ENCODE measurements at regions of chr22 and their contacts with region 1.

Region 1: GRCh38 chr22:31630331-31631329 is 31.4 kb downstream of the PISD start:
- DNase-seq: peak; percentile 71 to 90 (median 89)
- ATAC-seq: peak; percentile 92
- H3K4me3 ChIP-seq: peak overlapping the region; percentile 74
- H3K4me3 Mint-ChIP-seq: peak overlapping the region; percentile 80 to 92 (median 88)
- H3K27ac ChIP-seq: peak overlapping the region; percentile 95
- H3K27ac Mint-ChIP-seq: peak overlapping the region; percentile 89 to 96 (median 93)
- H3K4me1 ChIP-seq: peaks cover 16 to 19% of the 10 kb centered on the region in 2 donors
- H3K4me1 Mint-ChIP-seq: peaks cover 18 to 58% (median 38%) of the 10 kb centered on the region in 7 donors
- H3K27me3 ChIP-seq: no peaks in the 10 kb centered on the region
- H3K27me3 Mint-ChIP-seq: no peaks in the 10 kb centered on the region

Region 2: GRCh38 chr22:31107178-31107893 is 523.3 kb before region 1 on chr22 and contains the start of gene SELENOM:
- CTCF ChIA-PET with region 1: no interaction called
- POLR2A ChIA-PET with region 1: no interaction called
- intact Hi-C with region 1: loop called in 1 of 2 experiments (anchors 10 kb)
- DNase-seq: peak; percentile 73 to 89 (median 84)
- ATAC-seq: peak; percentile 98
- H3K4me3 ChIP-seq: peak within 1 kb of the TSS; percentile 94
- H3K4me3 Mint-ChIP-seq: peak within 1 kb of the TSS; percentile 88 to 98 (median 93)
- H3K27ac ChIP-seq: peak within 1 kb of the TSS; percentile 86
- H3K27ac Mint-ChIP-seq: peak within 1 kb of the TSS; percentile 81 to 96 (median 90)
- H3K4me1 ChIP-seq: peaks cover 8 to 16% of the 10 kb centered on the region in 2 donors
- H3K4me1 Mint-ChIP-seq: peaks cover 12 to 26% (median 20%) of the 10 kb centered on the region in 7 donors
- H3K27me3 ChIP-seq: no peaks in the 10 kb centered on the region
- H3K27me3 Mint-ChIP-seq: peaks cover 0 to 3% (median 0%) of the 10 kb centered on the region in 5 donors
- total RNA-seq, gene SELENOM: 9.1 to 71.5 (median 68.6) TPM

Region 3: GRCh38 chr22:31399211-31400028 is 231.2 kb before region 1 on chr22 and contains the start of gene DRG1:
- CTCF ChIA-PET with region 1: no interaction called
- POLR2A ChIA-PET with region 1: interaction called, 5 read pairs
- intact Hi-C with region 1: loop called (anchors 1 to 5 kb)
- DNase-seq: peak; percentile 90 to 98 (median 93)
- ATAC-seq: peak; percentile 99
- H3K4me3 ChIP-seq: peak within 1 kb of the TSS; percentile 88
- H3K4me3 Mint-ChIP-seq: peak within 1 kb of the TSS; percentile 92 to 99 (median 96)
- H3K27ac ChIP-seq: peak within 1 kb of the TSS; percentile 91
- H3K27ac Mint-ChIP-seq: peak within 1 kb of the TSS; percentile 85 to 97 (median 94)
- H3K4me1 ChIP-seq: peaks cover 10 to 15% of the 10 kb centered on the region in 2 donors
- H3K4me1 Mint-ChIP-seq: peaks cover 5 to 35% (median 22%) of the 10 kb centered on the region in 7 donors
- H3K27me3 ChIP-seq: no peaks in the 10 kb centered on the region
- H3K27me3 Mint-ChIP-seq: no peaks in the 10 kb centered on the region
- total RNA-seq, gene DRG1: 53.3 to 109 (median 84.4) TPM

Region 4: DNA sequence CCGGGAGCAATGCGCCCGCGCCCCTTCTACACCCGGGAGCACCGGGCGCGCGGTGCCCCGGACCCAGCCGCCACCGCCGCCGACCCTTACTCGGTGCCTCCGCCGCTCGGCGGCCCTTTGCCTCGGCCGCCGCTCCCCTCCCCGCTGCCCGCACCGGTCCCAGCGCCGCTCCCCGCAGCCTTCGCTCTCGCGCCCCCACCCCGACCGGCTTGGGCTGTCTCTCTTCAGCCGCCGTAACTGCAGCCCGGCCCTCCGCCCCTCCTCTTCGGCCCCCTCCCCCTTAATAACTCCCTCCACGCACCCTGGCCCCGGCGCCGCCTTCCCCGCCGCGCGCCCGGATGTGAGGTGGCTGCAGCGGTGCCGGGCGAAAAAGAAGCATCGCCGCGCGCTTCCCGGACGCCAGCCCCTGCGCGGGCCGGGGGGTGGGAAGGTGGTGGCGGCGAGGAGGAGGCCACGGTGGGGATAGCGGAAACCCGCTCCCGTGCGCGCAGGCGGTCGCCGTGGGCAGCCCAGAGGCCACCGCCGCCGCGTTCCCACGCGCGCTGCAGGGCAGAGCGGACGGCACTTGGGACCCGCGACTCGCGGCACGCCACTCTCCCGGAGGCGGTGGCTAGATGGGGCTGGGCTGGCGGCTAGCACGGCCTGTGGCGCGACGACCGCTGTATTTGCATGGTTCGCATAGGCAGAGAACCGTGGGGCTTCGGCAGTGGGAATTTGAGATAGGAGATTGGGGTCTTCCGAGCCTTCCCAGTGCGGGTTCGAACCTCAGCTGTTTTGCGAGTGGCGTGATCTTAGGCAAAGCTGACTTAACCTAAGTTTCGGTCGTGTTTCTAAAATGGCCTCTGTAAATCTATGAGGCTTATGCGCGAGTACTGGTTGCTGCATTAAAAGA is 140.8 kb before region 1 on chr22 and contains the start of gene EIF4ENIF1:
- CTCF ChIA-PET with region 1: no interaction called
- POLR2A ChIA-PET with region 1: interaction called, 6 read pairs
- intact Hi-C with region 1: loop called (anchors 1 kb)
- DNase-seq: peak; percentile 81 to 91 (median 87)
- ATAC-seq: peak; percentile 89
- H3K4me3 ChIP-seq: peak within 1 kb of the TSS; percentile 66
- H3K4me3 Mint-ChIP-seq: peak within 1 kb of the TSS; percentile 87 to 98 (median 94)
- H3K27ac ChIP-seq: peak within 1 kb of the TSS; percentile 92
- H3K27ac Mint-ChIP-seq: peak within 1 kb of the TSS; percentile 93 to 99 (median 96)
- H3K4me1 ChIP-seq: peaks cover 19 to 25% of the 10 kb centered on the region in 2 donors
- H3K4me1 Mint-ChIP-seq: peaks cover 7 to 54% (median 47%) of the 10 kb centered on the region in 7 donors
- H3K27me3 ChIP-seq: no peaks in the 10 kb centered on the region
- H3K27me3 Mint-ChIP-seq: no peaks in the 10 kb centered on the region
- total RNA-seq, gene EIF4ENIF1: 26.3 to 46.5 (median 36.8) TPM

Region 5: DNA sequence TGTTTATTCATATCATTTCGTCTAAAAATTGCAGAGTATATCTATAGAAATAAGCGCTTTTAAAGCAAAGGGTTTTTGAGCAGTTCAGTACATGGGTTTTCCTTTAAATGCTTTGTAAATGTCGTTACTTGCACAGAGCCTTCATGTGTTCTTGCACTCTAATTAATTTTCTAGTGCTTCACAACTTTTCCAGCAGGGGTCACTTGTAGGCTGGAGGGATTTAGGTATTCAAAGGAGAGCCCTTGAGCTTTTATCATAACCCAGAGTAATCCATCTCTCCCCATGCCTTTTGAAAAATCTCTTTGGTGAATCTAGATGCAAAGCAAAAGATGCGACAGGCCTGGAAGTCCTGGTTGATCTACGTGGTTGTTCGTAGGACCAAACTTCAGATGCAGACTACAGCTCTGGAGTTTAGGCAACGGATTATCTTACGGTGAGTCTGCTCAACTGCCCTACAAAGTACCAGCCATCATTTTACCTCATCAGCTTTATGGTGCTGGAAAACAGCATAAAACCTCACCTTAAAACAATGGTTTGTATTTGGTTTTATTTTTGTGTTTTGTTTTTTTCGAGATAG is 73.9 kb before region 1 on chr22:
- CTCF ChIA-PET with region 1: interaction called, 16 read pairs
- POLR2A ChIA-PET with region 1: no interaction called
- intact Hi-C with region 1: loop called (anchors 1 kb)
- DNase-seq: peak in 5 of 9 donors; percentile 25 to 40 (median 28)
- ATAC-seq: peak; percentile 49
- H3K4me3 ChIP-seq: no peak overlapping the region
- H3K4me3 Mint-ChIP-seq: no peak overlapping the region
- H3K27ac ChIP-seq: no peak overlapping the region
- H3K27ac Mint-ChIP-seq: peak overlapping the region in 1 of 9 donors; percentile 46
- H3K4me1 ChIP-seq: peaks cover 0 to 8% of the 10 kb centered on the region in 2 donors
- H3K4me1 Mint-ChIP-seq: peaks cover 3 to 21% (median 9%) of the 10 kb centered on the region in 7 donors
- H3K27me3 ChIP-seq: no peaks in the 10 kb centered on the region
- H3K27me3 Mint-ChIP-seq: no peaks in the 10 kb centered on the region

Region 6: DNA sequence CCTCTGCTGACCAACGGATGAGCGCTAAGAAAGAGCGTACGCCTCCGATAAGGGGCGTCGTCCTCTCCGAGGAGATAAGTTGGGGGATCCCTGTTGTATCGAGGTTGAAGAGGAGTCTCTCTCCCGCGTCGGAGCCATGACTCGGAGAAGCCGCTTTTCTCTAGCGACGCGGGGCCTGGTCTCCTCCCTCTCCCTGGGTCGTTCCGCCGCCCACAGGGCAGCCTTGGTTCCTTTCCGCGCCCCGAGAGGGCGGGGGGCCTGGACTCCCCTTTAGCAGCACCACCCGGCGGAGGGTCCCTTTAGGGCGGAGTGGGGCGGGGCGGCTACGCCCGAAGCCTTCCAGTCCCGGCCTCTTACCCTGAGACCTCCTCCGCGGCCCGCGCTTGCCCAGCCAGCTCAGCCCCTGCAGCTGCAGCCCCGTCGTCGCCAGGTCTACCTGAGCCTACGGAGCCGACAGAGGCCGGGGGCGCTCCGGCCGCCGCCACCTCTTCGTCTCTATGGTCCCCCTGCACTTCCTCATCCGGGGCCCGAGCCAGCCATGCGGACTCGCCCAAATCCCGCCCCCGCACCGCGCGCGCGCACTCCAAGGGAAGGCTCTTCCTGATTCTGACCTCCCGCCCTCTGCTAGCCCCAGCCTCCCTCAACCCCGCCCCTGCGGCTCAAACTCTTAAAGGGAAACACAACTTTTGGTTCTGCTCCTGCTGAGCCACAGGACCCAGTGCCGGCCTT is 119.2 kb after region 1 on chr22 and contains the start of gene PRR14L:
- CTCF ChIA-PET with region 1: no interaction called
- POLR2A ChIA-PET with region 1: no interaction called
- intact Hi-C with region 1: loop called in 1 of 2 experiments (anchors 1 kb)
- DNase-seq: peak; percentile 94 to 100 (median 98)
- ATAC-seq: peak; percentile 86
- H3K4me3 ChIP-seq: peak within 1 kb of the TSS; percentile 92
- H3K4me3 Mint-ChIP-seq: peak within 1 kb of the TSS; percentile 87 to 97 (median 94)
- H3K27ac ChIP-seq: peak within 1 kb of the TSS; percentile 83
- H3K27ac Mint-ChIP-seq: peak within 1 kb of the TSS; percentile 82 to 98 (median 96)
- H3K4me1 ChIP-seq: peaks cover 31 to 37% of the 10 kb centered on the region in 2 donors
- H3K4me1 Mint-ChIP-seq: peaks cover 36 to 65% (median 59%) of the 10 kb centered on the region in 7 donors
- H3K27me3 ChIP-seq: no peaks in the 10 kb centered on the region
- H3K27me3 Mint-ChIP-seq: peaks cover 0 to 2% (median 0%) of the 10 kb centered on the region in 5 donors
- total RNA-seq, gene PRR14L: 43.1 to 82.6 (median 66.9) TPM

Measured in naive thymus-derived CD4-positive, alpha-beta T cell (primary cell).